ENCODE measurements at regions of chr6 and their contacts with region 1.

Region 1: DNA sequence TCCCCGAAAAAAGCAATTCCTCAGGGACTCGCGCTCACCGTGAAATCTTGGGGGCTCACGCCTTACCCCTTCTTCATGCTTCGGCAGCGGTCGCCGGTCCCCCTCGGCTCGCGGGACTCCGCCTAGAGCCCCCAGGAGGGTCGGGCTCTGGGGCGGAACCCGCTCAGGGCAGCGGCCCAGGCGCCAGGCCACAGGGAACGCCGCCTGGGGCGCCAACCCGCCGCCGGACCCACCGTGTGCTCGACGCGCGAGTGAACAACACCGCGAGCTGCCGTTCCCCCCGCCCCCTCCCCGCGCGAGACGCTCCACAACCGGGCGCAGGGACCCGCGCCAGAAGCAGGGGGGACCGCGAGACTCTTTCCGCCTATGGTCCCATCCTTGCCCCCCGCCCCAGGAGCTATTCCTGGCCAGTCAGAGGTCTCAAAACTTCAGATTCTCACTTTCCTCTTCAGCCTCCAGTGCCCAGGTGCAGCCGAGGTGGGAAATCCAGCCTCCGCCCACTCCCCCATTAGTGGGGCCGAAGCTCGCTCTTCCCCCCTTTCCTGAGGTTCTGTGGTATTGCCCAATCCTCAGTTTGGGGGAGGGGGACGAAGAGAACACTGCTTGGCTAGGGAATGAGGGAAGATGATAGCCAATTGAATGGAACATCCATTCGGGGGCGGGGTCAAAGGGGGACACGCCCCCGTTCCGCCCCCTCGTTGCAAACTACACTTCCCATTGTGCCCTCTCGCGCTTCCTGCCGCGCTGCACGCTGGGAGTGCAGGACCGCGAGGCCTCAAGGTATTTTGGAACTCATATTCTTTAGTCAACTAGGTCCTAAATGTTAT is at the start of gene WASF1:
- DNase-seq: peak; percentile 93 to 99 (median 97)
- H3K4me3 ChIP-seq: peak within 1 kb of the TSS; percentile 69 to 100 (median 80)
- H3K27ac ChIP-seq: peak within 1 kb of the TSS in 4 of 5 donors; percentile 72 to 88 (median 83)
- H3K4me1 ChIP-seq: peaks cover 21 to 44% of the 10 kb centered on the region in 2 donors
- H3K27me3 ChIP-seq: no peaks in the 10 kb centered on the region
- CTCF ChIP-seq: no peak
- POLR2A ChIP-seq: peak; percentile 44 to 60
- total RNA-seq, gene WASF1: 4.7 to 13.0 (median 8.7) TPM

Region 2: GRCh38 chr6:110398778-110399177 is 219.2 kb after region 1 on chr6:
- intact Hi-C with region 1: loop called in 1 of 2 experiments (anchors 10 kb)
- DNase-seq: no peak
- H3K4me3 ChIP-seq: no peak overlapping the region
- H3K27ac ChIP-seq: peak overlapping the region in 1 of 5 donors; percentile 3
- H3K4me1 ChIP-seq: peaks cover 0 to 4% of the 10 kb centered on the region in 2 donors
- H3K27me3 ChIP-seq: no peaks in the 10 kb centered on the region
- CTCF ChIP-seq: no peak
- POLR2A ChIP-seq: no peak